ENCODE measurements at regions of chr6 and their contacts with region 1.

Region 1: DNA sequence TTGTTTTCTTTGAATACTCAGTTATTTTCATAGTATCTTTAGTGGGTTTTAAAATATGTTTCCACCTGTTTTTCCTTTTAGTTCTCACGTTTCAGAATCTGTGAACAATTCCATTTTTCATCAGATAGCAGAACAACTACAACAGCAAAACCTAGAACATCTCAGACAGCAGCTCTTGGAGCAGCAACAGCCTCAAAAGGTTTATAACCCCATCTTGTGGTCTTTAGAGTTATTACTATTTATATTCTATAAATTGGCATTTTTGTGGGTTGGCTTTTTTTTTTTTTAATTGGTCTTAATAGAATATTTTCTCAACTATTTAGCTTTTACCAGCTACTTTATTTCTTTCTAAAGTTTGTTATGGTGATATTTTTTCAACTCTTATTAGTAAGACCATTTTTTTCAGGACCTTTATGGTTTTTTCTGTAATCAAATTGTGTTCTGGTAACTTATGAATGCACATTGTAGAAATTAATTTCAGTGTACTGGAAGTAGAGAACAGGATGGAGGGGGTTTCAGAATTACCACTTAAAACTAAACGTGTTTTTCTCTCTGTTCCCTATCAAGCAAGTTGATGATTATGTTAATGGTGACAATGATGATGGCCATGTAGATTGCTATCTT is 72.2 kb downstream of the SCAF8 start:
- DNase-seq: peak in 2 of 9 experiments; percentile 57 to 67
- ATAC-seq: peak; percentile 81
- H3K4me3 ChIP-seq: no peak overlapping the region
- H3K4me3 Mint-ChIP-seq: no peak overlapping the region
- H3K27ac ChIP-seq: no peak overlapping the region
- H3K27ac Mint-ChIP-seq: no peak overlapping the region
- H3K4me1 ChIP-seq: no peaks in the 10 kb centered on the region
- H3K4me1 Mint-ChIP-seq: peaks cover 3% of the 10 kb centered on the region
- H3K27me3 ChIP-seq: no peaks in the 10 kb centered on the region
- H3K27me3 Mint-ChIP-seq: no peaks in the 10 kb centered on the region
- CTCF ChIP-seq: peak; percentile 63

Region 2: DNA sequence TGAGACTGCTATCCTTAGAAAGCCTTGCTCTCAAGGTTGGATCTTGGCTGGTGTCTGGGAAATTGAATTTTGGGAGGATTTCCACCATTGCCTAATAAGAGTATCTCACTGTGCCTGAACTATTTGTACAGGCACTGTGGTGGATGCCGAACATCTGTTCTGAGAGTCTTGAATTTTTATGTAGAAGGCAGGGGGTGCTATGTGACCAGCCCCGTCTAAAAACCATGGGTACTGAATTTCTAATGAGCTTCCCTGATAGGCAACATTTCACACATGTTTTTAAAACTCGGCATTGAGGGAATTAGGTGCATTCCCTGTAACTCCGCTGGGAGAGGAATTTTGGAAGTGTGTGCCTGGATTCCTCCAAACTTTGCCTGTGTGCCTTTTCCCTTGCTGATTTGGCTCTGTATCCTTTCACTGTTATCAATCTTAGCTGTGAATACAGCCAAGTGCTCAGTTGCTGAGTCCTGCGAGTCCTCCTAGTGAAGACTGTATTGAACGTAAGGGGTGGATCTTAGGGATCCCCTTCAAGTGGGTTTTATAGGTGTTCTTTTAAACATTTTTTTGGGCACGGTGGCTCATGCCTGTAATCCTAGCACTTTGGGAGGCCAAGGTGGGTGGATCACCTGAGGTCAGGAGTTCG is 99.8 kb before region 1 on chr6:
- CTCF ChIA-PET with region 1: interaction called, 10 read pairs
- POLR2A ChIA-PET with region 1: no interaction called
- intact Hi-C with region 1: loop called in 1 of 2 experiments (anchors 1 kb)
- DNase-seq: peak in 2 of 9 experiments; percentile 18 to 37
- ATAC-seq: no peak
- H3K4me3 ChIP-seq: no peak overlapping the region
- H3K4me3 Mint-ChIP-seq: no peak overlapping the region
- H3K27ac ChIP-seq: no peak overlapping the region
- H3K27ac Mint-ChIP-seq: no peak overlapping the region
- H3K4me1 ChIP-seq: no peaks in the 10 kb centered on the region
- H3K4me1 Mint-ChIP-seq: no peaks in the 10 kb centered on the region
- H3K27me3 ChIP-seq: peaks cover 0 to 2% of the 10 kb centered on the region in 2 experiments
- H3K27me3 Mint-ChIP-seq: peaks cover 19% of the 10 kb centered on the region
- CTCF ChIP-seq: no peak

Region 3: GRCh38 chr6:154791556-154792317 is 13.7 kb before region 1 on chr6:
- CTCF ChIA-PET with region 1: no interaction called
- POLR2A ChIA-PET with region 1: no interaction called
- intact Hi-C with region 1: loop called in 1 of 2 experiments (anchors 2 kb)
- DNase-seq: no peak
- ATAC-seq: no peak
- H3K4me3 ChIP-seq: no peak overlapping the region
- H3K4me3 Mint-ChIP-seq: no peak overlapping the region
- H3K27ac ChIP-seq: no peak overlapping the region
- H3K27ac Mint-ChIP-seq: no peak overlapping the region
- H3K4me1 ChIP-seq: no peaks in the 10 kb centered on the region
- H3K4me1 Mint-ChIP-seq: peaks cover 22% of the 10 kb centered on the region
- H3K27me3 ChIP-seq: no peaks in the 10 kb centered on the region
- H3K27me3 Mint-ChIP-seq: no peaks in the 10 kb centered on the region
- CTCF ChIP-seq: no peak